ENCODE measurements at regions of chr6 and their contacts with region 1.

Region 1: DNA sequence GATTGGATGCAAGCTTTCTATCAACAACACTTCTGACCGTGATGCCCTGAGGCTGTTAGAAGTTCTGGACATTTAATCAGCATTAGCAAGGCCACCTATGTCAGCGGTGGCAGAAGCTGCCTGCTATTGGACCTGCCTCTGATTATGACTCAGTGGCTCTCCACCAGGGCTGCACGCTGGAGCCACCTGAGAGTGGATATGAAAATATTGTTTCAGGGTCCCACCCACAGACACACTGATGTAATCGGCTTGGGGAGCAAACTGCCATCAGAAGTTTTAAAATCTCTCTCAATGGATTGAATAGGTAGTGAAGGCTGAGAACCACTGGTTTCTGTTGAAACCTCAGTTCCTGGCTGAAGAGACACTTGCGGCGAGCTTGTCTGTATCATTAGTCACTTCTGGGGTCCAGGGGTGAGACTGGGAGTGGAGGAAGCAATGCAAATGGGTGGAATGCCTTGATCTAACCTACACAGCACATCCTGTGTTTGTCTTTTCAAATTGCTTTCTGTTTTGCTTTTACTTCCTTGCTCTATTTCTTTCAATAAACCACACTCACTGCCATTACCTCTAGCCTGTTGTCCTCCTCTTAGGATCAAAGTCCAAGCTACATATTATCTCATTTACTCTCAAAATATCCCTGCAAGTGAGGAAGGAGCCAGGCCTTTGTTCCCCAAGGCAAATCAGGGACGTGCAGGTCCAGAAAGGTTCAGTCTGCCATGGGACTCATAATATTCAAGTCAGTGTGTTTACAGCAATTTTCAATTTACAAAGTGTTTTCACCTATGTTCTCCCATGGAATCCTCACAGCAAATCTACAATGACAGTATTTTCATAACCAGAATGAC is 4.2 kb downstream of the CLIC5 start:
- DNase-seq: peak; percentile 27 to 90 (median 67)
- ATAC-seq: peak; percentile 84
- H3K4me3 ChIP-seq: peak overlapping the region; percentile 23 to 33
- H3K4me3 Mint-ChIP-seq: peak overlapping the region; percentile 69
- H3K27ac ChIP-seq: peak overlapping the region; percentile 29 to 67
- H3K27ac Mint-ChIP-seq: peak overlapping the region; percentile 95
- H3K4me1 ChIP-seq: peaks cover 49% of the 10 kb centered on the region
- H3K4me1 Mint-ChIP-seq: peaks cover 54% of the 10 kb centered on the region
- H3K27me3 ChIP-seq: no peaks in the 10 kb centered on the region
- H3K27me3 Mint-ChIP-seq: peaks cover under 1% of the 10 kb centered on the region
- CTCF ChIP-seq: no peak

Region 2: DNA sequence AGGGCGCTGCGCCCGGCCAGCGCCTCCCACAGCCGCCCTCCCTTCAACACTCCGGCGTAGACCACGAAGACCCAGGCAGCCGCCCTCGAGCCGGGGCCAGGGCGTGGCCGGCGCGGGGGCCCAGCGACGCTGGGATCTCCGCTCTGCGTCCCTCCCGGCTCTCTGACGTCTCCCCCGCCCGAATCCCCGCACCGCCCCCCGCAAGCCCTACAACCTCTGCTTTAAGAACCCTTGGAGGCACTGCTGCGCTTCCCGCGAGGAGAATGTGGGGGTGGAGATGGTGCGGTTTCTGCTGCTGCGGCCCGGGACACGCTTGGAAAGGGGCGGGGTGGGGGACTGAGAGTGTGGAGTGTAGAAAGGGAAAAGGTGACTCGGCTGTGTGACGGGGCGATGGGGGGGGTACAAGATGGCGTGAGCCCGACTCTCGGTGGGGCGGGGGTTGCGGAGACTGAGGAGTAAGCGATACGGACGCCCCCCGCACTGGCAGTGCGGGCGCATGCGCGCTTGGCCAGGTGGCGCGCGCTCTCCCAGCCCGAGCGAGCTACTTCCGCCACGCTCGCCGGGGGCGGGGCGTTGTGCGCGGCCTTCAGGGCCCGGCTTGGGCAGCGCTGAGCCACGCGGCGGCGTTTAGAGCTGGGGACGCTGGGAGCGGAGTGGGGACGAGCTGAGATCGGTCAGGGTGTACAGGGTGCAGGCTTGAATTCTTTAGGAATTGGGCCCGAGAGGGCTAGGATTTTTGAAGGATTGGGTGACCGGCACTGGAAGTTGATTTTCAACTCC is 633.7 kb before region 1 on chr6 and contains the start of gene SUPT3H:
- CTCF ChIA-PET with region 1: no interaction called
- POLR2A ChIA-PET with region 1: no interaction called
- intact Hi-C with region 1: loop called in 1 of 2 experiments (anchors 5 kb)
- DNase-seq: peak; percentile 79 to 98 (median 91)
- ATAC-seq: peak; percentile 79
- H3K4me3 ChIP-seq: peak within 1 kb of the TSS; percentile 73 to 90
- H3K4me3 Mint-ChIP-seq: peak within 1 kb of the TSS; percentile 96
- H3K27ac ChIP-seq: peak within 1 kb of the TSS; percentile 83 to 95
- H3K27ac Mint-ChIP-seq: peak within 1 kb of the TSS; percentile 99
- H3K4me1 ChIP-seq: peaks cover 8% of the 10 kb centered on the region
- H3K4me1 Mint-ChIP-seq: peaks cover 29% of the 10 kb centered on the region
- H3K27me3 ChIP-seq: no peaks in the 10 kb centered on the region
- H3K27me3 Mint-ChIP-seq: no peaks in the 10 kb centered on the region
- CTCF ChIP-seq: no peak
- total RNA-seq, gene SUPT3H: 9.4 to 10.7 TPM

Region 3: GRCh38 chr6:45997875-45998506 is 13.5 kb before region 1 on chr6:
- CTCF ChIA-PET with region 1: no interaction called
- POLR2A ChIA-PET with region 1: interaction called, 3 read pairs
- intact Hi-C with region 1: loop called in 1 of 2 experiments (anchors 2 kb)
- DNase-seq: no peak
- ATAC-seq: no peak
- H3K4me3 ChIP-seq: no peak overlapping the region
- H3K4me3 Mint-ChIP-seq: no peak overlapping the region
- H3K27ac ChIP-seq: no peak overlapping the region
- H3K27ac Mint-ChIP-seq: no peak overlapping the region
- H3K4me1 ChIP-seq: no peaks in the 10 kb centered on the region
- H3K4me1 Mint-ChIP-seq: no peaks in the 10 kb centered on the region
- H3K27me3 ChIP-seq: no peaks in the 10 kb centered on the region
- H3K27me3 Mint-ChIP-seq: no peaks in the 10 kb centered on the region
- CTCF ChIP-seq: no peak

Measured in CD8-positive, alpha-beta T cell (primary cell).